Caco-2 (cell line): ENCODE measurements at regions of chr20 and their contacts with region 1.

Region 1: GRCh38 chr20:54103067-54103761 is 32.8 kb upstream of the BCAS1 start:
- DNase-seq: peak; percentile 89 to 94
- H3K4me3 ChIP-seq: no peak overlapping the region
- H3K4me3 Mint-ChIP-seq: no peak overlapping the region
- H3K27ac Mint-ChIP-seq: no peak overlapping the region
- H3K4me1 ChIP-seq: peaks cover 19% of the 10 kb centered on the region
- H3K4me1 Mint-ChIP-seq: peaks cover 11% of the 10 kb centered on the region
- H3K27me3 ChIP-seq: no peaks in the 10 kb centered on the region
- H3K27me3 Mint-ChIP-seq: no peaks in the 10 kb centered on the region
- CTCF ChIP-seq: peak; percentile 98 to 99

Region 2: GRCh38 chr20:53559816-53560215 is 543.4 kb before region 1 on chr20:
- CTCF ChIA-PET with region 1: no interaction called
- POLR2A ChIA-PET with region 1: no interaction called
- intact Hi-C with region 1: no loop called
- DNase-seq: peak in 1 of 2 experiments; percentile 10
- H3K4me3 ChIP-seq: no peak overlapping the region
- H3K4me3 Mint-ChIP-seq: no peak overlapping the region
- H3K27ac Mint-ChIP-seq: no peak overlapping the region
- H3K4me1 ChIP-seq: no peaks in the 10 kb centered on the region
- H3K4me1 Mint-ChIP-seq: no peaks in the 10 kb centered on the region
- H3K27me3 ChIP-seq: no peaks in the 10 kb centered on the region
- H3K27me3 Mint-ChIP-seq: no peaks in the 10 kb centered on the region
- CTCF ChIP-seq: no peak

Region 3: DNA sequence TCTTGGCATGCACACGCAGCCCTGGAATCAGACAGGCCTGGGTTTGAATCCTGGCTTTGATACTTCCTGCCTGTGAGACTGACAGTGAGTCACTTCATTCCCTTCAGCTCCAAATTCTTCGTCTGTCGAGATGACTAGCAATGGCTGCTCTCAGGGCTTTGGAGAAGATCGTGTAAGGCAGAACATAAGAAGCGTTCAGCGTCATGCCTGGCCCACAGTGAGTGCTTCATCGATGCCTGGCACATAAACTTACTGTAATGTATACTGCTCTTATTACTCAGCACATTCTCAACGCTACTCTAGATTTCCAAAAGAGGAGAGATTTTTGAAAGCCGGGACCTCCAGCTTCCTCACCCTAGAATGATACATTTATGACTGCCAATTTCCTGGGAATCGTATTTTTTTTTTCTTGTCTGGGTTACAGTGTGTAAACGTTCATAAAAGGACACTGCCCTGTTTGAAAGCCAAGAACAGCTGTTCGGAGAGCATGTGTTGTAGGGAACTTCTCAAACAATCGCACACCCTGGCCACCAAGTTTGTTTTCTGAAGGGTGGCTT is 16.7 kb before region 1 on chr20:
- CTCF ChIA-PET with region 1: no interaction called
- POLR2A ChIA-PET with region 1: no interaction called
- intact Hi-C with region 1: no loop called
- DNase-seq: no peak
- H3K4me3 ChIP-seq: no peak overlapping the region
- H3K4me3 Mint-ChIP-seq: no peak overlapping the region
- H3K27ac Mint-ChIP-seq: no peak overlapping the region
- H3K4me1 ChIP-seq: peaks cover 6% of the 10 kb centered on the region; the same call in 1 of the 2 replicates
- H3K4me1 Mint-ChIP-seq: peaks cover 7% of the 10 kb centered on the region
- H3K27me3 ChIP-seq: no peaks in the 10 kb centered on the region
- H3K27me3 Mint-ChIP-seq: peaks cover 3% of the 10 kb centered on the region
- CTCF ChIP-seq: no peak

Region 4: DNA sequence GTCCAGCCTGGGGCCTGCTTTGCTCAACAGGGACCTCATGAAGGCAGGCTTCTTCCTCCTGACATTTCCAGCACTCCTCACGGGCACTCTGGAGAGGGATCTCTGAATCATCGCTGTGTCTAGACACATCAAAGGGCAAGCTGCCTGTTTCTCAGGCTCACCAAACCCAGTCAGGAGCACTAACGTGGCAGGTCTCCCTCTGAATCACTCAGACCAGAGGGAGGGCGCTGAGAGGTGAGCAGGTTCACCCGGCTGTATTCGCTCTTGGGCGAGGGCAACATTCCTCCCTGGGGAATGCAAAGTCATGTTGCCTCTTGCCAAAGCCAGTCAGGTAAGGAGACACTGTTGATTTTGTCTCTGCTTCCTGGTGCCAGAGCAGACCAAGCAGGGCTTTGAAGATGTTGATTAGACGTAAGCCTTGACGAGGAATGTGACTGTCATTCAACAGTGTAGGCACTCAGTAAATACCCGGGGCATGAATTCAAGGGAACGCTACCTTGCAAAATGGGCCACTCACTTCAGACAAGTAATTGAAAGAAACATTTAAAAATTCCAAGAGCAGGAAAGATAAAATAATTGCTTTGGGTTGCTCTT is 20.5 kb after region 1 on chr20:
- CTCF ChIA-PET with region 1: interaction called, 3 read pairs
- POLR2A ChIA-PET with region 1: no interaction called
- intact Hi-C with region 1: loop called (anchors 1 kb)
- DNase-seq: peak; percentile 94 to 97
- H3K4me3 ChIP-seq: no peak overlapping the region
- H3K4me3 Mint-ChIP-seq: peak overlapping the region; percentile 10
- H3K27ac Mint-ChIP-seq: peak overlapping the region; percentile 54
- H3K4me1 ChIP-seq: peaks cover 27% of the 10 kb centered on the region
- H3K4me1 Mint-ChIP-seq: peaks cover 19% of the 10 kb centered on the region
- H3K27me3 ChIP-seq: no peaks in the 10 kb centered on the region
- H3K27me3 Mint-ChIP-seq: no peaks in the 10 kb centered on the region
- CTCF ChIP-seq: no peak

Region 5: GRCh38 chr20:54148947-54149503 is 45.8 kb after region 1 on chr20:
- CTCF ChIA-PET with region 1: no interaction called
- POLR2A ChIA-PET with region 1: no interaction called
- intact Hi-C with region 1: no loop called
- DNase-seq: peak in 1 of 2 experiments; percentile 67
- H3K4me3 ChIP-seq: no peak overlapping the region
- H3K4me3 Mint-ChIP-seq: no peak overlapping the region
- H3K27ac Mint-ChIP-seq: no peak overlapping the region
- H3K4me1 ChIP-seq: peaks cover 13% of the 10 kb centered on the region; the same call in 1 of the 2 replicates
- H3K4me1 Mint-ChIP-seq: peaks cover 7% of the 10 kb centered on the region
- H3K27me3 ChIP-seq: no peaks in the 10 kb centered on the region
- H3K27me3 Mint-ChIP-seq: peaks cover 4% of the 10 kb centered on the region
- CTCF ChIP-seq: no peak

Region 6: DNA sequence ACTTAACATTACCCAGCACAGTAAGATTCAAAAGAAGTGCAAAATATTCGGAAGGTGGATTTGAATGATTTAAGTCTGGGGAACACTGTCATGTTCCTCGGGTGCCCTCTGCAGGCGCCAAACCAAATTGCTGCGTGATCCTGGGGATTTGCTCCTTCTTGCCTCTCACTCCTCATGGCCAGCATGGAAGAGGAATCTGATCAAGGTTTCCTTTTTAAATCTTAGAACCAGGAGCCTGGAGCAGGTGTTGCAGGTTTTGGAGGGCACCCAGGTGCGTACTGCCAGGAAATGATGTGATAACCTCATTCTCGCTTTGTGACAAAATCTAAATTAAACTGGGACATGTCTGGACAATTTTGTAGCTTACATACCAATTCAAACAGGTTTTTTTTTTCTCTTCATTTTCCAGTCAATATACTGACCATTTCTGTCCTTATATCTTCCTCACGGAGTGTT is 96.5 kb after region 1 on chr20:
- CTCF ChIA-PET with region 1: interaction called, 20 read pairs
- POLR2A ChIA-PET with region 1: no interaction called
- intact Hi-C with region 1: loop called (anchors 1 kb)
- DNase-seq: peak; percentile 84 to 91
- H3K4me3 ChIP-seq: no peak overlapping the region
- H3K4me3 Mint-ChIP-seq: no peak overlapping the region
- H3K27ac Mint-ChIP-seq: no peak overlapping the region
- H3K4me1 ChIP-seq: peaks cover 6% of the 10 kb centered on the region; the same call in 1 of the 2 replicates
- H3K4me1 Mint-ChIP-seq: peaks cover 11% of the 10 kb centered on the region
- H3K27me3 ChIP-seq: no peaks in the 10 kb centered on the region; the same call in 1 of the 2 replicates
- H3K27me3 Mint-ChIP-seq: peaks cover 9% of the 10 kb centered on the region
- CTCF ChIP-seq: peak; percentile 99

Region 7: DNA sequence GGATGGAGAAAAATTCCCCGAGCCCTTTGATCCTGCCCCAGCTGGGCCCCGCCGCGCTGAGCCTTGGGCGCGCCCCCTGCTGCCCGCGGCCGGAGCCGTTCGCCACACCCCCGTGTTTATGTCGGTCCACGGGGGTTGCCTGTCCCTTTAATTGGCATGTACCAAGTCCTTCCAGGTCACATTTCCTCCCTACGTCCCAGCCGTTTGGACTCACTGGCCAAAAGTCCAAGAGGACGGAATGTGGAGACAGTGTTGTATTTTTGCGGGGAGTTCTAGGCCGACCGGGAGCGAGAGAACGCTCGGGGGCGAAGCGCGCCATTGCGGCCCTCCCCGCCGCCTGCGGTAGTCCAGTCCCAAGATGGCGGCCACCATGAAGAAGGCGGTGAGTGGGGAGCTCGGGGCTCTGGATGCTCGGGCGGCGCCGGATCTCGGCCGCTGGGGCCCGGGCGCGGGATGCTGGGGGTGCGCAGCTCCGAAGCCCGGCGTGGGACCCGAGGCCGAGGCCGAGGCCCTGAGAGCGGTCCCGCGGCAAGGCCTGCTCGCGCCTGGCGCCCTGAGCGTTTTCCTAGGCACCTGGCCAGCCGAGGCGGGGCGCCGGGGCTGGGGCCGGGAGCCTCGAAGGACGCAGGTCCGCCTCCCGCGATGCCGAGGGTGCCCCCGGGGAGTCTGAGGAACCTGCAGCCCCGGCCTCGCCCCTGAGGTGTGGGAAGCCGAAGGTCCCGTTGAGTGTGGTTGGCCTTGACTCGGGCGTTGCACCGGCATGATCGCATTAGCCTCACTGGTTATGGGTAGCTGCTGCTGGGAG is 104.7 kb after region 1 on chr20 and contains the start of gene PFDN4:
- CTCF ChIA-PET with region 1: interaction called, 17 read pairs
- POLR2A ChIA-PET with region 1: no interaction called
- intact Hi-C with region 1: no loop called
- DNase-seq: peak; percentile 96 to 99
- H3K4me3 ChIP-seq: peak within 1 kb of the TSS; percentile 93
- H3K4me3 Mint-ChIP-seq: peak within 1 kb of the TSS; percentile 70
- H3K27ac Mint-ChIP-seq: peak within 1 kb of the TSS; percentile 99
- H3K4me1 ChIP-seq: peaks cover 9% of the 10 kb centered on the region
- H3K4me1 Mint-ChIP-seq: peaks cover 6% of the 10 kb centered on the region
- H3K27me3 ChIP-seq: no peaks in the 10 kb centered on the region
- H3K27me3 Mint-ChIP-seq: no peaks in the 10 kb centered on the region
- CTCF ChIP-seq: peak; percentile 95 to 98
- total RNA-seq, gene PFDN4: 86.7 and 93.4 TPM in 2 replicates

Region 8: GRCh38 chr20:54475334-54476168 is 372.3 kb after region 1 on chr20 and contains the start of gene DOK5:
- CTCF ChIA-PET with region 1: no interaction called
- POLR2A ChIA-PET with region 1: no interaction called
- intact Hi-C with region 1: no loop called
- DNase-seq: no peak
- H3K4me3 ChIP-seq: no peak within 1 kb of the TSS
- H3K4me3 Mint-ChIP-seq: no peak within 1 kb of the TSS
- H3K27ac Mint-ChIP-seq: no peak within 1 kb of the TSS
- H3K4me1 ChIP-seq: no peaks in the 10 kb centered on the region
- H3K4me1 Mint-ChIP-seq: no peaks in the 10 kb centered on the region
- H3K27me3 ChIP-seq: no peaks in the 10 kb centered on the region
- H3K27me3 Mint-ChIP-seq: peaks cover 19% of the 10 kb centered on the region
- CTCF ChIP-seq: no peak
- total RNA-seq, gene DOK5: not detected in 2 replicates